Calu3 (cell line): ENCODE measurements at regions of chr12 and their contacts with region 1.

Region 1: GRCh38 chr12:100348657-100349454 is 8.0 kb upstream of the SLC17A8 start:
- DNase-seq: no peak
- H3K4me3 Mint-ChIP-seq: no peak overlapping the region
- H3K27ac Mint-ChIP-seq: no peak overlapping the region
- H3K4me1 Mint-ChIP-seq: no peaks in the 10 kb centered on the region
- H3K27me3 Mint-ChIP-seq: no peaks in the 10 kb centered on the region
- CTCF ChIP-seq: no peak

Region 2: DNA sequence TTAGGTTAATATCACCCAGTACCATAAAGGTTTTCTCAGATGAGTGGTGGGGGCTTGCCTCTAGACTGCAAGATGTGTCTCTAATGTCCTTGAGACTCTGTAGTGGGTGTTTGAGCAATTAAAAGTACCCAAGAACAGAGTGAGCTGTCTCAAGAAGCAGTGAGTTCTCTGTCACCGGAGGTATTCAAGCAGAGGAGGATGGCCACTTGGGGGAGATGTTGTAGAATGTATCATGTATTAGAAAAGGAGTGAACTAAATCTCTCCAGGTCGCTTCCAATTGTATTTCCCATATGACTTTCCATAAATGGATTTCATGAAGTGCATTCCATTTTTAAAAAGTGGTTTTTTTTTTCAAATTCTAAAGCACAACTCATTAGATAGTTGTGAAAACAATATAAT is 43.0 kb after region 1 on chr12:
- CTCF ChIA-PET with region 1: no interaction called
- intact Hi-C with region 1: loop called (anchors 1 kb)
- DNase-seq: peak; percentile 65
- H3K4me3 Mint-ChIP-seq: no peak overlapping the region
- H3K27ac Mint-ChIP-seq: no peak overlapping the region
- H3K4me1 Mint-ChIP-seq: no peaks in the 10 kb centered on the region
- H3K27me3 Mint-ChIP-seq: no peaks in the 10 kb centered on the region
- CTCF ChIP-seq: peak; percentile 62

Region 3: DNA sequence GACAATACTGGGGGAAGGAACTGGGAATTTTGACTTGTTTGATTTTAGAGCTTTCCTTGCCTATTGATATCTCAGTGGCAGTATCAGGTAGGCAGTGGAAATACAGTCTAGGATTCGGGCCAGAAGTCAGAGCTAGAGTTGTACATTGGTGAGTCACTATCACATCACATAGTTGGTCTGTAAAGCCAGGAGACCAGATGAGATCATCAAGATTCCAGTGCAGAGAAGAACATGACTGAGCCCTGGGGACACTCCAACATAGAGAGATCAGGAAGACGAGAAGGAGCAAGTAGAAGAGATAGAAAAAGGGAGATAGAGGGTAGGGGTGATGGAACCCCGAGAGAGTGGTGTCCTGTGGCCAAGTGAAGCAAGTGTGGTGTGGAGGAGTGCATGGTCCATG is 78.2 kb after region 1 on chr12:
- CTCF ChIA-PET with region 1: no interaction called
- intact Hi-C with region 1: no loop called
- DNase-seq: peak; percentile 7
- H3K4me3 Mint-ChIP-seq: no peak overlapping the region
- H3K27ac Mint-ChIP-seq: no peak overlapping the region
- H3K4me1 Mint-ChIP-seq: peaks cover 12% of the 10 kb centered on the region
- H3K27me3 Mint-ChIP-seq: no peaks in the 10 kb centered on the region
- CTCF ChIP-seq: no peak

Region 4: GRCh38 chr12:100554608-100555077 is 205.8 kb after region 1 on chr12:
- CTCF ChIA-PET with region 1: interaction called, 4 read pairs
- intact Hi-C with region 1: loop called (anchors 1 kb)
- DNase-seq: peak; percentile 74
- H3K4me3 Mint-ChIP-seq: no peak overlapping the region
- H3K27ac Mint-ChIP-seq: no peak overlapping the region
- H3K4me1 Mint-ChIP-seq: peaks cover 9% of the 10 kb centered on the region
- H3K27me3 Mint-ChIP-seq: no peaks in the 10 kb centered on the region
- CTCF ChIP-seq: peak; percentile 78

Region 5: DNA sequence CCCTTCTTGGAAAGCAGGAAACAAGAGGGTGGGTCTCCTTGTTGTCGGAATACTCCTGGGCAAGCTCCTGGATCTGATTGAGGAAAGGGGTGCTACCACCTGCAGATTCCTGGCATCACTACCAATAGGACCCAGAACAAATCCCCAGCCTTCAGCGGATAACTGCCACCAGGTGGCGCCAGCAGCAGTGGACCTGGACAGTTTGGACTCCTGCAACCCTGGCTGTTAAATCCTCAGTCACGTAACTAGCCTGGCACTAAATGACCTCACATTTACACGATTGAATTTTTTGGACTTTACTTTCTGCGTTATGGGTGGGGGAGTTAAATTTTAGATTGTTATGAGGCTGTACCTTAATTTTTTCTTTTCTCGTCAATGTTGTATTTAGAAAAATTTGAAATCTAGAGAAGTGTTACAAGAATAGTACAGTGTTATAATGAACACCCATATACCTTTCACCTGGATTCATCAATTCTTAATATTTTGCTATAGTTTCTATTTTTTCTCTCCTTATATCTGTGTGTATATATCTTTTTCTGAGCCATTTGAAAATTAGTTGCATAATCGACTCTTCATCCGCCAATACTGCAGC is 320.2 kb after region 1 on chr12:
- CTCF ChIA-PET with region 1: no interaction called
- intact Hi-C with region 1: loop called (anchors 5 kb)
- DNase-seq: peak; percentile 92
- H3K4me3 Mint-ChIP-seq: no peak overlapping the region
- H3K27ac Mint-ChIP-seq: no peak overlapping the region
- H3K4me1 Mint-ChIP-seq: peaks cover 24% of the 10 kb centered on the region
- H3K27me3 Mint-ChIP-seq: no peaks in the 10 kb centered on the region
- CTCF ChIP-seq: peak; percentile 91

Region 6: DNA sequence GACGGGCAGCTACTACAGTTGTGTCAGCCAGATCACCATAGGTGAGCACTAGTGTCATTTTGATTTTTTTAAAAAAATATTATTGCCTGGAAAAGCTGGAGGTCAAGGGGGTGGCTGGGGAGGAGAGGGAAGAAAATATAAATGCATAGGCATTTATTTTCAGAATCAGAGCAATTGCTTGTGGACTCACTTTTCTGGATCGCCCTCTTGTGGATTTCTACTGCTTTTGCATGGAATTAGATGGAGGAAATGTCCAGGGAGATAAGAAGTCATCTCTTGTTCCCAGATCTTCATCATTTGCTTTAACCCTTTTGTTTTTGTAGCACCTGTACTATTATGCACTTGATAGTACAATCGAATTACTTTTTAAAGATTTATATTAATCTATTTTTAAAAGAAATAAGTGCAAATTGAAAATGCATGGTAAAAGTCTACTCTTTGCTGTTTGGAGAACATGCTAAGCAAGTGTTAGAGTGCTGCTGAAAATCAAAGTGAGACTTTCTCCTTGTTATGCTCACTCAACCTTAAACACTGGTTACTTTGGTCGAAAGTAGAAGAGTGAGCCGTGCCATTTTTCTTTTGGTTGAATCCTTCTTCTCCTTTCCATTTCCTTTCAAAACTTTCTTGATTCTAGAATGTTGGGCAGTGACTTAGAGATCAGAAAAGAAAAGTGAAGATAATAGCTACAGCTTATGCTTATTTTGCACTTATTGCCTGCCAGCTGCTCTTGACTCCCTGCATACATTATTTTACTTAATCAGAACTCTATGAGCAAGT is 385.1 kb after region 1 on chr12:
- CTCF ChIA-PET with region 1: no interaction called
- intact Hi-C with region 1: loop called (anchors 1 kb)
- DNase-seq: peak; percentile 25
- H3K4me3 Mint-ChIP-seq: no peak overlapping the region
- H3K27ac Mint-ChIP-seq: no peak overlapping the region
- H3K4me1 Mint-ChIP-seq: no peaks in the 10 kb centered on the region
- H3K27me3 Mint-ChIP-seq: no peaks in the 10 kb centered on the region
- CTCF ChIP-seq: peak; percentile 24

Region 7: DNA sequence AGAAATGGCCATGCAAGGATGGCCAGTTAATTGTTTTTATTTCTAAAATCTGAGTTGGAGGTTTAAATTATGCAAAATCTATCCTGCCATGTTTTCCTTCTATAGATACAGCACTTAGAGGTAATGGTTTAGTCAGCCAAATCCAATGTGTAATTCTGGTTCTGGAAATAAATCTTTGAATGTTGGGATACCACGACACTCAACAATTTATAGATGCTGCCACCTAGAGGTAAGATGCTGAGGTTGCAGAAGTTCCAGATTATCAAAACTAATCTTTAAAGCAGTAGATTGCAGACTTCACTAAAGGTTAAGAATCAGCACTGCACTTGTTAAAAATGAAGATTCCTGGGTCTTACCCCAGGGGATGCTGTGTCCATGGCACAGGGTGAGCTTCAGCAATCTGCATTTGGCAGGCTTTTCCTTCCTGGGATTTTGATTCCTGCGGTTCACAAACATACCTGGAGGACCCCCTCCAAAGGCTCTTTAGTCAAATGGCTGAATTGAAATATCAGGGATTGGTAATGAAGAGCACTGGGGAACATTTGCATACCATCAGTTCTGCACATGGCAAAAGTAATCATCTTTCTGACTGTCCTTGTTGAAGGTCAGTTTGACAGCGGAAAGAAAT is 392.3 kb after region 1 on chr12:
- CTCF ChIA-PET with region 1: no interaction called
- intact Hi-C with region 1: loop called (anchors 1 kb)
- DNase-seq: peak; percentile 27
- H3K4me3 Mint-ChIP-seq: no peak overlapping the region
- H3K27ac Mint-ChIP-seq: no peak overlapping the region
- H3K4me1 Mint-ChIP-seq: no peaks in the 10 kb centered on the region
- H3K27me3 Mint-ChIP-seq: no peaks in the 10 kb centered on the region
- CTCF ChIP-seq: peak; percentile 35